Left cardiac atrium (tissue), 4 donors: ENCODE measurements at regions of chr1 and their contacts with region 1.

Region 1: DNA sequence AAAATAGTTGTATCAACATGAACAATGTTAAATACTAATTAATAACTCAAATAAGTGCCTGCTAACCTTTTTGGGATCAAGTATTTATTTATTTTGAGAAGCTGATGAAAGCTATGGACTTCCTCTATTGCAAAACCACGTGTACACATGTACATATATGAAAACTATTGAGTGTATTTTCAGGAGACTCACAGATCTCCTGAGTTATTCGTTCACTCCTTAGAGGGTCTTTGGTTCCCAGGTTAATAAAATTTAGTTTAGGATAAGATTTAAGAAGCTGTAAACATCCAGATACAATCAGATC is 130.5 kb downstream of the DISC1 start:
- DNase-seq: no peak
- ATAC-seq: peak in 1 of 2 donors; percentile 44

Region 2: DNA sequence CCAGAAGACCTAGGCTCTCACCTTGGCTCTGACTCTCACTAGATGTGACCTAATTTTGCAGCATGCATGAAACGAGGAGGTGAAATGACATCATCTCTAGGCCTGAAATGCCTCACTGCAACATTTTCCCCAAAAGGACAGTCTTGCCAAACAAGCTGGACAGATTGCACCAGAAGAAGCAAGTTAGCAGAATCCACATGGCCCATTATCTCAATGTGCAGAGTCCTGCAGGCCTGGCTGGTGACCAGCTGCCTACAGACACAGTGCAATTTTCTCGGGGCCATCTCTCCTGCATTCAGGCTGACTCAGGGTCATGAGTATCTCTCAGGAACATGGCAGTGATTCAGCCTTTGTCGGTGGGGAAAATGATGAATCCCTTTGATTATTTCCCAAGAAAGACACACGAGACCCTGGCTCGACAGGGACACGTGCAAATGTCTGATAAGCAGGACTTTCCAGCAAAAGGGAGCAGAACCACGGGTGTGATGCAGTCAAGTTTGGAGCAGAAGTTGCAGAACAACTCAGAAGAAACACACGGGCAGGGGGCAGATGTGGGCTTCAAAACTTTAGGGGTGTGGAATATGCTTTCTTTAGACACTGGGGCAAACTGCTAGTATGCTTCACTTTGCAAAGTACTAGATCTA is 556.5 kb before region 1 on chr1:
- intact Hi-C with region 1: no loop called
- DNase-seq: no peak
- ATAC-seq: peak in 1 of 2 donors; percentile 11

Region 3: DNA sequence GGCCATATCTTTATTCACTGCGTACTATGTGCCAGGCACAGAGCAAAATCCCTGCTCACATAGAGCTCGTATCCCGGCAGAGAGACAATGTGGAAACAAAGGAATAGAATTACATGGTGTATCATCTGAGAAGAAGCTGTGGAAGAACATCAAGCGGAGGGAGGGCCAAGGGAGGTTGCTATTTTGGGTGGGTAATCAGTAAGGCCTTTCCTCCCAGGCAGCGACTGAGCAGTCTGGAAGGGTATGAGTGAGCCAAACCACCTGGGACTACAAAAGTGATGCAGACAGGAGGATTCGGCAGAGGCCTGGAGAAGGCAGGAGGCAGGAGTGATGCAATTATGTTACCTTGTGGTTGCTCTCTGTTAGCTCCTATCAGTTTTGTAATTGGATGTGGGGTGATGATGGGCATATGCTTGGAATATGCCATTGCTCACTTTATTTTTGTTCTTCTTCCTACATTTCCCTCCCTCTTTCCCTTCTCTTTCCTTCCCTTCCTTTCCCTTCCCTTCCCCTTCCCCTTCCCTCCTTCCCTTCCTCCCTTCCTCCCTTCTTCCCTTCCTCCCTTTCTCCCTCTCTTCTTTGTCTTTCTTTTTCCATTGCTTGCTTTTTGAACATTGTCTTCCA is 42.4 kb after region 1 on chr1:
- intact Hi-C with region 1: loop called in 1 of 2 experiments (anchors 5 kb)
- DNase-seq: no peak
- ATAC-seq: peak in 1 of 2 donors; percentile 71

Region 4: GRCh38 chr1:233240829-233241682 is 1484.0 kb after region 1 on chr1:
- intact Hi-C with region 1: loop called in 1 of 2 experiments (anchors 10 kb)
- DNase-seq: peak; percentile 60
- ATAC-seq: peak; percentile 88 to 93